HEK293T (cell line): ENCODE measurements at regions of chr13 and their contacts with region 1.

Region 1: DNA sequence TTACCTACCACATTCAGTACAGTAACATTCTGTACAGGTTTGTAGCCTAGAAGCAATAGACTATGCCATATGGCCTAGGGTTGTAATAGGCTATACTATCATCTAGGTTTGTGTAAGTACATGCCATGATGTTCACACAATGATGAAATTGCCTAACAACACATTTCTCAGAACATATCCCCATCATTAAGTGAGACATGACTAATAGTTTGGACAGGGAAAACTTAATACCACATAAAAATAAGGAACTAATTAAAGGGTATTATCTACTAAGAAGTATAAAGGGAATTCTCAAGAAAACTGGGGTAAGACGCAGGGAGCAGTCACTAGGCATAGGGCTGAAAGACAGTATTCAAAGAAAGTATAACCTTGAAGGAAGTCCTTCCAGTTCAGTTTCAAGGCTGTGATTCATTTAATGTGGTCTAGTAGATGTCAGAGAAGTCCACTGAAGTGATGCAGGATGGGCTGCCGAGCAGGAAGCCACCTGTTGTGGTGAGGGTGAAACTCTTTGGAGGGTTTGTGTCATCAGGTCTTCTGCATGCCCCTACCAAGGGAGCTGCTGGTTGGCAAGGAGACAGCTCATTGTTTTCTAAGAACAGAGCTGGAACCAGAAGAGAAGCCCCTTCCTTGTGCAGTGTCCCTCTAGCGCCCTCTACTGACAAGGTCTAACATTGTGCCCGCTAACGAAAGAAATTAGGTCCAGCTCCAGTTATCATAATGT is 122.9 kb downstream of the OLFM4 start:
- DNase-seq: peak; percentile 69

Region 2: GRCh38 chr13:52617070-52618060 is 534.1 kb before region 1 on chr13:
- CTCF ChIA-PET with region 1: no interaction called
- POLR2A ChIA-PET with region 1: no interaction called
- DNase-seq: peak; percentile 85

Region 3: GRCh38 chr13:52924289-52925148 is 227.0 kb before region 1 on chr13:
- CTCF ChIA-PET with region 1: no interaction called
- POLR2A ChIA-PET with region 1: no interaction called
- DNase-seq: no peak

Region 4: GRCh38 chr13:52968074-52968700 is 183.3 kb before region 1 on chr13:
- CTCF ChIA-PET with region 1: interaction called, 11 read pairs
- POLR2A ChIA-PET with region 1: no interaction called
- DNase-seq: peak; percentile 80